ENCODE measurements at regions of chr17 and their contacts with region 1.

Region 1: DNA sequence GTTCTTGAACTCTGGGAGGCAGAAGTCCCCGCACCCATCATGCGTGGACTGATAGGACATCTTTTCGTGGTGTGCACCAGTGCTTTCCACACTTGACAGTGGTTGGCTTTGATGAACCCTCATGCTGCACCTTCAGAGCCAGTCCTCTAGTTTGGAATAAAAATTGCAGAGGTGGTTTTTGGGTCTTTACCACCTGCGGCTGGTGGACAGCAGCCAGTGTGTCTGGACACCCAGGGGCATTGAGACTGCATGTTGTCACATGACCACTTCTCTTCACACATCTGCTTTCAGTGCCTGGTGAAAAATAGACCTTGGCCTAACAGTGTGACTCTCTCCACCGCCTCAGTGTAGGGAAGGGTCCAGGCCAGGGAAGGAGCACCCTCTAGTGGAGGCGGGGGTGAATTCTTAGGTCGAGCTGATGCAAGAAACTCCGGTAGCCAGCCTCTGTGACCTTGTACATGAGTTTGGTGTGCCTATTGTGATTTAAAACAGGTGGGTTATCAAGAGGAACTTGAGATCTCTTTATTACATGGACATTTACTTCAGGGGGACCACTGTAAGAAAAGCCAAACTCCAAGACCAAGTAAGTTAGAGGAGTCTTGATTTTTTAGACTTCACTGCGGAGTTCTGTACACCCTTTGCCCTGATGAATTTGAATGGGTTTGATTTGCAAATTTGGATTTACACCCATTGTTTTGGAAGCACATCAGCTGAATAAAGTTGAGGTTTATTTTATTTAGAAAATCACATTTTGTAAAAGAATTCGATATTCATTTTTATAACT is 17.9 kb downstream of the GOSR2 start:
- DNase-seq: peak; percentile 83
- H3K4me3 Mint-ChIP-seq: no peak overlapping the region
- H3K27ac Mint-ChIP-seq: peak overlapping the region; percentile 64
- H3K4me1 Mint-ChIP-seq: peaks cover 19% of the 10 kb centered on the region
- H3K27me3 Mint-ChIP-seq: no peaks in the 10 kb centered on the region

Region 2: DNA sequence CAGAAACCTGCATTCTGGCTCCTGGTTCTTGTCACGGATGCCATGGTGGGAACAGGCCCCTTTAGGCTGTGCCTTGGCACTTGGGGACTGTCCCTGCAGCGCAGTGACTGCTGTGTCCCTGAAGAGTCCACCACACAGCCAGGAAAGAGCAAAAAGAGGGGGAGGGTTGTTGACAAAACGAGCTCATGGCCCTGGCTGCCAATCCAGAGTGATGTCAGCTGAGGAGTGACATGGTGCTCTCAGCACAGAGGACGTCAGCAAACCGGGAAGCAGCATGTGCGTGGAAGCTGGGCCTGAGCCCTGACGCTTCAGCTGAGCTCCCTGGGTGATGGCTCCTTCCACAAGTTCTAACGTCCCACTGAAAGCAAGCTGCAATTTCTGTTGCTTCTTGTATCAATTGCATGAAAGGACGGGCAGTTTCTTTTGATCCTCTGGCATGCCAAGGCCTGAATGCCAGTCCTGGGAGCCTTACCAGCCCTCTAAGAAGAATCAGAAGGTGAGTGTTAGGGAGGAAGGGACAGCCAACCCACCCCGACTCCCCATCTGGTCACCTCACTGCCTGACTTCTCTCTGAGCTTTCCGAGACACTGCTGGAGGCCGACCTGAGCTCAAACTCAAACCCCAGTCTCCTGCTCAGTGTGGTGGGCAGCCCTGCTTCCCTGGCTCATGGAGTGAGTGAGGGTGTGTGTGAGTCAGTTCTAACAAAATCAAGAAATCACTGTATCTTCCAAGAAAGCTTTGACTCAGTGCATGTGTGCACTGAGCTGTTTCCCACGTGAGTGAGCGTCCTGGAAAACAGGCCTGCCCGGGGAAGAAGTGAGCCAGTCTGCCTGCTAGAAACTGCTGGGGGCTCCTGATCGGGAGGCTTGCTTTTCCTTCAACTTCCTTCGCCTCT is 107.6 kb before region 1 on chr17:
- CTCF ChIA-PET with region 1: interaction called, 10 read pairs
- intact Hi-C with region 1: no loop called
- DNase-seq: no peak
- H3K4me3 Mint-ChIP-seq: no peak overlapping the region
- H3K27ac Mint-ChIP-seq: no peak overlapping the region
- H3K4me1 Mint-ChIP-seq: peaks cover 5% of the 10 kb centered on the region
- H3K27me3 Mint-ChIP-seq: peaks cover 6% of the 10 kb centered on the region

Region 3: DNA sequence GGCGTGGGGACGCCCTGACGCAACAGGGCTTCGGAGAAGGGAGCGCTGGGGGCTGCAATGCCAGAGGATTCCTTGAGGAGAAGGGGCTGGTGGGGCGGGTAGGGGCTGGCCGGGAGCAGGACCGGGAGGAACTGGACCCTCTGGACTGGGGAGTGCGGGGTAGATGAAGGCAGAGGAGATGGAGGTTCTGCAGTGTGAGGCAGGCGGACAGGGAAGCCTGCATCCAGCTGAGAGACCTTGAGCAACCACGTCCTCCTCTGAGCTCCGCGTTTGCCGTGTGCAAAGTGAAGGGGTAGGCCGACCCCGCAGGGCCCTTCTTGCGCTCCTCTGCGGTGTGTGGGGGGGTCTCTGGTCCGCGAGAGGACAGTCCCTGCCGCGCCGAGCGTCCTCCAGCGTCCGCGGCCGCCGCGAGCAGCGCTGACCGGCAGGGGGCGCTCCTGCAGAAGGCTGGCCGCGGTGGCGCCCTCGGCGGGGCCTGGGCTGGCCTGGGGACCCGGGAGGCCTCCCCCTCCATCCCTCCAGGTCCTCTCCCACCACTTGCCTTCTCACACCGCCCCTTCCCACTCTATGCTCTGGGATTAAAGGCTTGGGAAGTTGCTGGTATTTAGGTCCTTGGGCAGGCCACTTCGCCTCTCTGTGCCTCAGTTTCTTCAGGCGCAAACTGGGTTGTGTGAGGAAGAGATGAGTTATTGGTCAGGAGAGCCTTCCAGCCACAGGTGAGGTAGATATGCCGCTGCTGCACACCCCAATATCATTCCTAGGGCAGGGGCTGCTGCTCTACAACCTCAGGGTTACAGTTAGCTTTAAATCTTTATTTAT is 99.0 kb before region 1 on chr17:
- CTCF ChIA-PET with region 1: interaction called, 28 read pairs
- intact Hi-C with region 1: loop called (anchors 1 kb)
- DNase-seq: no peak
- H3K4me3 Mint-ChIP-seq: no peak overlapping the region
- H3K27ac Mint-ChIP-seq: no peak overlapping the region
- H3K4me1 Mint-ChIP-seq: no peaks in the 10 kb centered on the region
- H3K27me3 Mint-ChIP-seq: peaks cover 38% of the 10 kb centered on the region

Region 4: GRCh38 chr17:46922804-46923635 is 17.8 kb before region 1 on chr17 and contains the start of gene GOSR2:
- CTCF ChIA-PET with region 1: interaction called, 10 read pairs
- intact Hi-C with region 1: no loop called
- DNase-seq: peak; percentile 92
- H3K4me3 Mint-ChIP-seq: peak within 1 kb of the TSS; percentile 96
- H3K27ac Mint-ChIP-seq: peak within 1 kb of the TSS; percentile 99
- H3K4me1 Mint-ChIP-seq: peaks cover 49% of the 10 kb centered on the region
- H3K27me3 Mint-ChIP-seq: no peaks in the 10 kb centered on the region
- total RNA-seq, gene GOSR2: 32.8 to 38.1 TPM

Region 5: DNA sequence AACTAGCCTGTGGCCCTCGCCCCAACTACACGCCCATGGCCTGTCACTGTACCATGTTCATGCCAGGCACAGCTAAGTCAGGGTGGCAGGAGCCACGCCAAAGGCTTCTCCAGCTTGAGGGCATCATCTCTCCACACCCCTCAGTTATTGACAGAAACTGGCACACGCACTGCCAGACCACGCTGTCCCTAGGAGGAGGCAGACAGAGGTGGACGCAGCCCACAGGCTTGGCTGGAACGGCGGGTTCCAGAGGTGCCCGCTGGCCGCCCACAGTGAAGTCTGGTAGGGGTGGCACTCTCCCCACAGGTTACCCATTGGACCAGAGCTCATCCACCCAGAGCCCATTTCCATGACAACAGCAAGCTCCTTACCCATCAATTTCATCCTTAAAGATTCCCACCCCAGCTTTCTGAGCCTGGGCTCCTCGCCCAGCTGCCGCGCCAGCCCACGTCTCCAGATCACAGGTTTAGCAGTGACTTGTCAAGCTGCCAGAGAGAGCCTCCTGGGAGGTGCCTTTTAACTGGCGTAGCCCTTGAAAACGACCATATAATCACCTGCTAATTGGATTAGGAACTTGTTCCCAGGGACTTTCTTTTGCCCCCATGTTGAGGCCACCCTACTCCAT is 10.3 kb after region 1 on chr17:
- CTCF ChIA-PET with region 1: interaction called, 23 read pairs
- intact Hi-C with region 1: no loop called
- DNase-seq: no peak
- H3K4me3 Mint-ChIP-seq: no peak overlapping the region
- H3K27ac Mint-ChIP-seq: no peak overlapping the region
- H3K4me1 Mint-ChIP-seq: no peaks in the 10 kb centered on the region
- H3K27me3 Mint-ChIP-seq: no peaks in the 10 kb centered on the region

Region 6: GRCh38 chr17:46995841-46996571 is 55.2 kb after region 1 on chr17:
- CTCF ChIA-PET with region 1: interaction called, 7 read pairs
- intact Hi-C with region 1: loop called (anchors 1 kb)
- DNase-seq: no peak
- H3K4me3 Mint-ChIP-seq: no peak overlapping the region
- H3K27ac Mint-ChIP-seq: no peak overlapping the region
- H3K4me1 Mint-ChIP-seq: no peaks in the 10 kb centered on the region
- H3K27me3 Mint-ChIP-seq: no peaks in the 10 kb centered on the region

Region 7: GRCh38 chr17:47315451-47316266 is 374.8 kb after region 1 on chr17:
- CTCF ChIA-PET with region 1: no interaction called
- intact Hi-C with region 1: loop called (anchors 1 kb)
- DNase-seq: peak; percentile 56
- H3K4me3 Mint-ChIP-seq: no peak overlapping the region
- H3K27ac Mint-ChIP-seq: no peak overlapping the region
- H3K4me1 Mint-ChIP-seq: no peaks in the 10 kb centered on the region
- H3K27me3 Mint-ChIP-seq: no peaks in the 10 kb centered on the region